GM12878 (cell line): ENCODE measurements at regions of chr14 and their contacts with region 1.

Region 1: DNA sequence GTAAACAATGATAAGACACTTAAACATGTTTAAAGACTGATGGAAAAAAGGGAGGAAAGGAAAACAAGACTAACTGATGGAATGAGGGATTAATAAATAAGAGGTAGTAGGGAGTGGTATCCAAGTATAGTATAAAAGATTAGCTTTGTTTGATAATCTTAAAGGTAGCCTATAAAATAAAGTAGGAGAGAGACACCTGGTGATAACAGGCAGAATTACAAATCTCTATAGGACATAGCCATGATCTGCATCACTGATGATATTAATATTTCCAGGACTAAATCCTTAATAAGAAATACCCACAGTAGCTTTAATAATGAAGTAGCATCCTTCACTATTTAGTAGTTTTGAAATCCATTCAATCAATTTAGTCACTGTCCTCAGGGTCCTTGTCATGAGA is 30.4 kb downstream of the DLGAP5 start:
- DNase-seq: no peak
- ATAC-seq: peak; percentile 65
- H3K4me3 ChIP-seq: no peak overlapping the region
- H3K27ac ChIP-seq: no peak overlapping the region
- H3K4me1 ChIP-seq: no peaks in the 10 kb centered on the region
- H3K27me3 ChIP-seq: no peaks in the 10 kb centered on the region
- CTCF ChIP-seq: peak; percentile 32 to 67 (median 38); a peak in 5 of 6 replicates
- EP300 ChIP-seq: no peak
- POLR2A ChIP-seq: no peak
- RAD21 ChIP-seq: peak; percentile 64

Region 2: DNA sequence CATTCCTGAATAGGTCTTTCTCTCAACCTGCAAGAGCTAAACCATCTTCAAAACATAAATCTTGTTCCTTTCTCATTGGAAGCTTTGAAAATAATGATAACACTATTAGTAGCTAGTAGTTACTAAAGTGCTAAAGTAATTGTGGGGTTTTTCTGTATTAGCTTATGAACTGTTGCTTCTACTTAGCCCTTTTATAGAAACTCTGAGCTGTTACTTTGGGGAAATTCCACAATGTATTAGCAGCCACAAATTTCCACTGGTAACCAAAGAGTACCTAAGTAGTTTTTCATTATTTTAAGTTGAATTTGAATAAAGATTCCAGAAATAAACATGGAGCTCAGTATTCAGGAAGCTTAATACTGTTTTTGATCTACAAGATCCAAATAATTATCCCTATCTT is 115.9 kb before region 1 on chr14:
- CTCF ChIA-PET with region 1: interaction called, 7 read pairs
- POLR2A ChIA-PET with region 1: no interaction called
- RAD21 ChIA-PET with region 1: interaction called, 6 read pairs
- SMC1A ChIA-PET with region 1: interaction called, 12 read pairs
- in situ Hi-C with region 1: no loop called
- intact Hi-C with region 1: no loop called
- DNase-seq: no peak
- ATAC-seq: peak; percentile 82
- H3K4me3 ChIP-seq: no peak overlapping the region
- H3K27ac ChIP-seq: peak overlapping the region; percentile 19; the same call in 1 of the 2 replicates
- H3K4me1 ChIP-seq: 0 out of 2 replicates have a peak, but pooled peaks cover 4% of the 10 kb centered on the region
- H3K27me3 ChIP-seq: no peaks in the 10 kb centered on the region
- CTCF ChIP-seq: no peak
- EP300 ChIP-seq: no peak
- POLR2A ChIP-seq: no peak
- RAD21 ChIP-seq: no peak

Region 3: GRCh38 chr14:55077155-55077554 is 83.8 kb before region 1 on chr14:
- CTCF ChIA-PET with region 1: interaction called, 7 read pairs
- POLR2A ChIA-PET with region 1: no interaction called
- RAD21 ChIA-PET with region 1: interaction called, 5 read pairs
- SMC1A ChIA-PET with region 1: interaction called, 21 read pairs
- in situ Hi-C with region 1: no loop called
- intact Hi-C with region 1: no loop called
- DNase-seq: no peak
- ATAC-seq: peak; percentile 48
- H3K4me3 ChIP-seq: no peak overlapping the region
- H3K27ac ChIP-seq: no peak overlapping the region; the same call in 1 of the 2 replicates
- H3K4me1 ChIP-seq: peaks cover 40% of the 10 kb centered on the region
- H3K27me3 ChIP-seq: no peaks in the 10 kb centered on the region
- CTCF ChIP-seq: no peak
- EP300 ChIP-seq: no peak
- POLR2A ChIP-seq: no peak
- RAD21 ChIP-seq: no peak

Region 4: GRCh38 chr14:55085060-55085660 is 75.8 kb before region 1 on chr14:
- CTCF ChIA-PET with region 1: interaction called, 73 read pairs
- POLR2A ChIA-PET with region 1: no interaction called
- RAD21 ChIA-PET with region 1: interaction called, 95 read pairs
- SMC1A ChIA-PET with region 1: interaction called, 93 read pairs
- in situ Hi-C with region 1: loop called (anchors 5 kb)
- intact Hi-C with region 1: loop called (anchors 1 kb)
- DNase-seq: no peak
- ATAC-seq: no peak
- H3K4me3 ChIP-seq: no peak overlapping the region
- H3K27ac ChIP-seq: no peak overlapping the region
- H3K4me1 ChIP-seq: 0 out of 2 replicates have a peak, but pooled peaks cover under 1% of the 10 kb centered on the region
- H3K27me3 ChIP-seq: no peaks in the 10 kb centered on the region
- CTCF ChIP-seq: no peak
- EP300 ChIP-seq: no peak
- POLR2A ChIP-seq: no peak
- RAD21 ChIP-seq: no peak

Region 5: GRCh38 chr14:55094321-55095157 is 66.5 kb before region 1 on chr14:
- CTCF ChIA-PET with region 1: interaction called, 73 read pairs
- POLR2A ChIA-PET with region 1: no interaction called
- RAD21 ChIA-PET with region 1: interaction called, 95 read pairs
- SMC1A ChIA-PET with region 1: interaction called, 93 read pairs
- in situ Hi-C with region 1: loop called (anchors 5 kb)
- intact Hi-C with region 1: loop called (anchors 1 kb)
- DNase-seq: no peak
- ATAC-seq: no peak
- H3K4me3 ChIP-seq: no peak overlapping the region
- H3K27ac ChIP-seq: no peak overlapping the region
- H3K4me1 ChIP-seq: peaks cover 25% of the 10 kb centered on the region
- H3K27me3 ChIP-seq: no peaks in the 10 kb centered on the region
- CTCF ChIP-seq: no peak
- EP300 ChIP-seq: no peak
- POLR2A ChIP-seq: no peak
- RAD21 ChIP-seq: no peak

Region 6: GRCh38 chr14:55129428-55130195 is 31.4 kb before region 1 on chr14:
- CTCF ChIA-PET with region 1: interaction called, 12 read pairs
- POLR2A ChIA-PET with region 1: interaction called, 3 read pairs
- RAD21 ChIA-PET with region 1: interaction called, 3 read pairs
- SMC1A ChIA-PET with region 1: interaction called, 6 read pairs
- in situ Hi-C with region 1: no loop called
- intact Hi-C with region 1: no loop called
- DNase-seq: no peak
- ATAC-seq: peak; percentile 83
- H3K4me3 ChIP-seq: peak overlapping the region; percentile 73
- H3K27ac ChIP-seq: 0 out of 2 replicates have a peak overlapping the region, but pooled peaks have one; percentile 24
- H3K4me1 ChIP-seq: peaks cover 6% of the 10 kb centered on the region
- H3K27me3 ChIP-seq: no peaks in the 10 kb centered on the region
- CTCF ChIP-seq: no peak
- EP300 ChIP-seq: no peak
- POLR2A ChIP-seq: peak; percentile 71
- RAD21 ChIP-seq: no peak

Region 7: GRCh38 chr14:55146425-55146824 is 14.6 kb before region 1 on chr14:
- CTCF ChIA-PET with region 1: interaction called, 6 read pairs
- POLR2A ChIA-PET with region 1: no interaction called
- RAD21 ChIA-PET with region 1: interaction called, 3 read pairs
- SMC1A ChIA-PET with region 1: interaction called, 12 read pairs
- in situ Hi-C with region 1: no loop called
- intact Hi-C with region 1: no loop called
- DNase-seq: no peak
- ATAC-seq: no peak
- H3K4me3 ChIP-seq: no peak overlapping the region
- H3K27ac ChIP-seq: no peak overlapping the region
- H3K4me1 ChIP-seq: no peaks in the 10 kb centered on the region
- H3K27me3 ChIP-seq: no peaks in the 10 kb centered on the region
- CTCF ChIP-seq: no peak
- EP300 ChIP-seq: no peak
- POLR2A ChIP-seq: no peak
- RAD21 ChIP-seq: no peak